HEK293T (cell line): ENCODE measurements at regions of chr1 and their contacts with region 1.

Region 1: GRCh38 chr1:39672551-39672947 is 642 bp upstream of the NT5C1A start:
- DNase-seq: peak; percentile 26

Region 2: DNA sequence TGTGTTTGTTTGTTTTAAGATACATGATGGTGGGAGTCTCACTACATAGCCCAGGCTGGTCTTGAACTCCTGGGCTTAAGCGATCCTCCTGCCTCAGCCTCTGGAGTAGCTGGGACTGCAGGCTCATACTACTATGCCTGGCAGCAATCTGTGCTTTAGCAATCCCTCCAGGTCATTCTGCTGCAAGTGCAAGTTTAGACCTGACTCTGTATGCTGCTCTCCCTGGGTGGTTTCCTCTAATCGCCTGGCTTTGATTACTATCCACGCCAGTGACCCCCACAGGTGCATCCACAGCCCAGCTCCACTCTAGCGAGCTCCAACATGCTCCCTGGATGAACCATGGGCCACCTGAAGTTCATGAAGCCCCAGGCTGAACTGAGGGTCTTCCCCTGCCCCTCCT is 80.5 kb before region 1 on chr1:
- CTCF ChIA-PET with region 1: no interaction called
- POLR2A ChIA-PET with region 1: no interaction called
- DNase-seq: no peak

Region 3: DNA sequence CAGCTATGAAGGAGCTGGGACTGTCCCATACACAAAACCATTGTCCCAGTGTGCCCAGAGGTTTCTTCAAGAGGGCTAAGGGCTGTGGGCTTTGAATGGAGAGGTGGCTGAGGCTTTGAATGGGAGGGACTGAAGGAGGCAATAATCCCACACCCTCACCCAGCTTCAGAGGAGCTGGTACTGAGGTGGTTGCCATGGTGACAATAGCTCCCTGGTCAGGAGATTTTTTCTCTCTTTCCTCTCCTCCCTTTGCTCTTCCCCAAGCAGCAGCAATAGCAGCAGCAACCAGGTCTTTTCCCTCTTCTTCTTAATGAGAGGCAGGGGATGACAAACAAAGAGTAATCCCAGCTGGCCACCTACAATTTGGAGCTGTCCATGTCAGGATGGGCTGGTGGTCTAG is 17.1 kb after region 1 on chr1:
- CTCF ChIA-PET with region 1: interaction called, 12 read pairs
- POLR2A ChIA-PET with region 1: interaction called, 5 read pairs
- DNase-seq: no peak

Region 4: DNA sequence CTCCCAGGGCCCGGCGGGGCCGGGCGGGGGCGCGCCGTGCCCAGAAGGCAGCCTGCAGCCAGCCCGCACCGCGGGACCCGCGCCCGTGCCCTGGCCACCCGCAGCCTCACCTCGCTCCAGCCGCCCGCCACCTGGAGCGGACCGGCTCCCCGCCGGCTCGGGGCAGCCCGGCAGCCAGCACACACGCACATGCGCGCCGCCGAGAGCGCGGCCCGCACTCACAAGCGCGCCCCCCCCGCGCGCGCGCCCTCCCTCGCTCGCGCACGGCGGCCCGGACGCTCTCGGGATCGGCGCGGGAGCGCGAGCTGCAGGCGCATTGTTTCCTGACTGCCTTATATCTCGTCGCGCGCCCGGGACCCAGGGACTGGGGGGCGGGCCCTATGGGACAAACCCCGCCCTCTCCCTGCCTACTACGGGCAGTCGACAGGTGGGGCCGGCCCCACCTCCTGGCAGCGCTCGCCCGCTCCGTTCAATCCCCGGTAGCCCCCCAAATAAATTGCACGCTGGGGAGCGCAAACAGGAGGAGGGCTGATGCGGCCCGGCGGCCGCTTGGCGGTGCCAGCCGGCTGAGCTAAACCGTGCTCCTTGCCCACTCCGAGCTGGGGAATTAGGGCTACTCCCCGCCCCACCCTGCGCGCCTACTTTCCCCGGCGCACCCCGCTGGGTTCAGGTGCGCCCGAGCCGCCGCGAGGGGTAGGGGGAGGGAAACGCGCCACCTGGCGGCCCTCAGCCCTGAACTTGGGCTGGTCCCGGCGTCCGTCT is 229.3 kb after region 1 on chr1 and contains the start of gene MYCL:
- CTCF ChIA-PET with region 1: no interaction called
- POLR2A ChIA-PET with region 1: no interaction called
- DNase-seq: peak; percentile 86